ENCODE measurements at regions of chr15 and their contacts with region 1.

Region 1: GRCh38 chr15:77738441-77739302 is 106.0 kb upstream of the LINGO1 start:
- DNase-seq: no peak
- ATAC-seq: no peak
- H3K4me3 ChIP-seq: no peak overlapping the region
- H3K27ac ChIP-seq: no peak overlapping the region
- H3K4me1 ChIP-seq: no peaks in the 10 kb centered on the region
- H3K27me3 ChIP-seq: peaks cover 0 to 41% (median 10%) of the 10 kb centered on the region in 9 donors
- CTCF ChIP-seq: no peak
- POLR2A ChIP-seq: no peak

Region 2: DNA sequence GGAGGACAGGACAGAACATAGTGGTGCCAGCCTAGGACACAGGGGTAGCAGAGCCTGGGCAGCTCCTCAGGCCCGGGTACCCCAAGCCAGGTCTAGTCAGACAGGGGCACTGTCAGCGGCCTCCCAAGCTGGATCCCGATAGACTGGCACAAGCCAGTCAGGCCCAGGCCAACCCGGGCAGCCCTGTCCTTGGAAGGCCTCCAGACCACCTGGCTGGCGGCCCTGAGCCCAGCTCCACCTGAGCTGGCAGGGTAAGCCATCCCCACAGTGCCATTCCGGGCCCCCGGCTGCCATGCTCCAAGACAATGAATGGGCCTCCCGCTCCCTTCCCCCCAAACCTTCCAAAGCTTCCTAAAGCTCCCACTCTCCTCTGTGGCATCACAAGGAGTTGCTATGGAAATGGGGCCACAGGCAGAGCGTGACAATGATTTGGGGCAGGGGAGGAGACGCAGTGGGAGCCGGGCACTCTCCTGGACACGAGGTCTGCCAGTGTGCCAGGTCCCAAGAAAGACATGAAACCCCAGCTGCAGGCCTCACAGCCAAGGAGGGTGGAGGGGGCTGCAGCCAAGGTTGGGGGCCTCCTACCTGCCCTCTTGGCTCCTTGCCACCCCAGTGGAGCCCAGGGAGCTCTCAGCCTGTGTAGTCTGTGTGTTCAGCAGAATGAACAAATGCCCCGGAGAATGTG is 59.6 kb after region 1 on chr15:
- intact Hi-C with region 1: loop called in 1 of 10 experiments (anchors 10 kb)
- DNase-seq: no peak
- ATAC-seq: no peak
- H3K4me3 ChIP-seq: no peak overlapping the region
- H3K27ac ChIP-seq: no peak overlapping the region
- H3K4me1 ChIP-seq: no peaks in the 10 kb centered on the region
- H3K27me3 ChIP-seq: peaks cover 0 to 5% (median 0%) of the 10 kb centered on the region in 9 donors
- CTCF ChIP-seq: no peak
- POLR2A ChIP-seq: no peak

Region 3: GRCh38 chr15:78225783-78226541 is 487.3 kb after region 1 on chr15:
- intact Hi-C with region 1: no loop called
- DNase-seq: peak in 1 of 5 donors; percentile 14
- ATAC-seq: no peak
- H3K4me3 ChIP-seq: no peak overlapping the region
- H3K27ac ChIP-seq: no peak overlapping the region
- H3K4me1 ChIP-seq: peaks cover 0 to 22% (median 7%) of the 10 kb centered on the region in 12 donors
- H3K27me3 ChIP-seq: no peaks in the 10 kb centered on the region
- CTCF ChIP-seq: no peak
- POLR2A ChIP-seq: no peak

Measured in heart left ventricle (tissue), 16 donors.